Activated CD4-positive, alpha-beta memory T cell treated with anti-CD3 and anti-CD28 coated beads for 36 hours (primary cell): ENCODE measurements at regions of chr2 and their contacts with region 1.

Region 1: GRCh38 chr2:239361311-239361642 is 39.5 kb downstream of the HDAC4 start:
- DNase-seq: no peak
- H3K4me3 Mint-ChIP-seq: no peak overlapping the region
- H3K27ac Mint-ChIP-seq: no peak overlapping the region
- H3K4me1 Mint-ChIP-seq: peaks cover 17% of the 10 kb centered on the region
- H3K27me3 Mint-ChIP-seq: no peaks in the 10 kb centered on the region

Region 2: GRCh38 chr2:239329284-239329971 is 31.8 kb before region 1 on chr2:
- CTCF ChIA-PET with region 1: no interaction called
- POLR2A ChIA-PET with region 1: no interaction called
- intact Hi-C with region 1: no loop called
- DNase-seq: no peak
- H3K4me3 Mint-ChIP-seq: no peak overlapping the region
- H3K27ac Mint-ChIP-seq: no peak overlapping the region
- H3K4me1 Mint-ChIP-seq: peaks cover 40% of the 10 kb centered on the region
- H3K27me3 Mint-ChIP-seq: no peaks in the 10 kb centered on the region

Region 3: DNA sequence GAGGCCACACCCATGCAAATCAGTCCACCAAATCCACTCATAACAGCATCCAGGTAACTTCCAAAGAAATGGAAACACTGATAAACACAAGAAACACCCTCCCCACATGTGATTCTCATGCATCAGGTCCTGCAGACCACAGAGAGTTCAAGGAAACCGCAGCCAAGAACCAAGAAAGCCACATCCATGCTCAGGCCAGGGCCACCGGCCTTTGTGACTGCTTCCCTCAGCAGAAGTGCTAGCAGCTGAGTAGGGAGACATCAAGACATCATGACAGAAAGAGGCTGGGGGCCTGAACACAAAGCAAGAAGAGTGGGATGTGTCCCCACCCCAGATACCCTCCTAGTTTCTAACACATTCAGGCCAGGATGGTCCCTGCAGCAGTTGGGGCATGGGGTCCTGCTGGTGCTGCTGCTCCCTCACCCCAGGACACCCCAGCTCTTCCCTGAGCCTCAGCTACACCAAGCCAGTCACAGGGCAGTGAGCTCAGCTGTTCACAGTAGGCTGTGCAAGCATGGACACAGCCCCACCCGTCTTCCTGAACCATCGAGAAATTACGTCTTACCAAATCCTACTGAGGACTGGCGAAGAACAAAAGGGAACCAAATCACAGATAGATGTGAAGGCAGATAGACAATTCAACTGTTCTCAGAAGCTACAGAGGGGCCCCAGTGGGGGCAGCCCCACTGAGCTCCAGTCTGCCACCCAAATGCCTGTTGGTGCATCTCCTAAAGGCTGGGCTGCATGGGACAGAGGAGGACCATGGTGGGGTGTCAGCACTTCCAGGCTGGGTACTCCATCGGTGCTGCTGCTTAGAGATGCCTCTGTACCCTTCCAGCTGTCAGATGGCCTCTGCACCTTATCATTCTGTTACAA is 21.3 kb before region 1 on chr2:
- CTCF ChIA-PET with region 1: no interaction called
- POLR2A ChIA-PET with region 1: no interaction called
- intact Hi-C with region 1: loop called (anchors 2 kb)
- DNase-seq: peak; percentile 67
- H3K4me3 Mint-ChIP-seq: no peak overlapping the region
- H3K27ac Mint-ChIP-seq: no peak overlapping the region
- H3K4me1 Mint-ChIP-seq: peaks cover 34% of the 10 kb centered on the region
- H3K27me3 Mint-ChIP-seq: no peaks in the 10 kb centered on the region